ENCODE measurements at regions of chr2 and their contacts with region 1.

Region 1: DNA sequence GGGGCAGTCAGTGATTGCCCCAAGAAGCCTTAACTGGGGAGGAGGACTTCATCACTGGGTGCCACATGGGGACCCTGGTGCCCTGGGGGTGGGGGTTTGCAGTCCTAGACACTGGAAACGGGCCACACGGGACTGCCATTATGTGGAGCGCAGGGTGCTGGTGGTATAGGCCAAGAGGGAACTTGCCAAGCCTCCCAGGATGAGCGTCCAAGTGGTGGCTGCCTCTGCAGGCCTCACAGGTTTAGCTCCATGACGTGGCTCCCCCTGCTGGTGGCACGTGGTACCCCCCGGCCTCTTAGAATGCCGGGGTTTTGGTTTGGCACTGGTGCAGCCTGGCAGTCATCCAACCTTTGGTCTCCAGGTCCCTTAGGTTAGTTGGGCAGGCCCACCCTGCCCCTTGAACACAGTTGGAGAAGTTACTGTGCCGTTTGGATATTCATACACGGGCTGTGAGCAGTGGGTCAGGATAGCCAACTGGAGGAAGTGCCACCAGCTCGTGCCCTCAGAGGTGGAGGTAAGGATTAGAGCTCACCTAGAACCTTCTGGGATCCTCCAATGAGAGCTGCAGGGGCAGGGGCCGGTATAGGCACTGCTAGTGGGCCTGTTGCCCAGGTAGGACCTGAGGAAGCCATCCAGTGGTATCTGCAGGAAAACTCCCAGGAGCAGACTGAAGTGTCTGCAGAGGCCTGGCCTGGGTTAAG is 5.6 kb downstream of the PTMA start:
- DNase-seq: peak; percentile 93 to 97 (median 95)
- H3K4me3 ChIP-seq: peak overlapping the region in 1 of 7 experiments; percentile 45
- H3K27ac ChIP-seq: no peak overlapping the region
- H3K4me1 ChIP-seq: peaks cover 8 to 38% (median 33%) of the 10 kb centered on the region in 4 experiments
- H3K27me3 ChIP-seq: no peaks in the 10 kb centered on the region

Region 2: GRCh38 chr2:231612179-231613053 is 101.5 kb before region 1 on chr2:
- CTCF ChIA-PET with region 1: interaction called, 176 read pairs
- POLR2A ChIA-PET with region 1: interaction called, 21 read pairs
- DNase-seq: peak; percentile 89 to 94 (median 93)
- H3K4me3 ChIP-seq: peak overlapping the region in 2 of 7 experiments; percentile 68 to 78
- H3K27ac ChIP-seq: peak overlapping the region; percentile 94 to 96
- H3K4me1 ChIP-seq: peaks cover 3 to 63% (median 55%) of the 10 kb centered on the region in 4 experiments
- H3K27me3 ChIP-seq: no peaks in the 10 kb centered on the region

Region 3: DNA sequence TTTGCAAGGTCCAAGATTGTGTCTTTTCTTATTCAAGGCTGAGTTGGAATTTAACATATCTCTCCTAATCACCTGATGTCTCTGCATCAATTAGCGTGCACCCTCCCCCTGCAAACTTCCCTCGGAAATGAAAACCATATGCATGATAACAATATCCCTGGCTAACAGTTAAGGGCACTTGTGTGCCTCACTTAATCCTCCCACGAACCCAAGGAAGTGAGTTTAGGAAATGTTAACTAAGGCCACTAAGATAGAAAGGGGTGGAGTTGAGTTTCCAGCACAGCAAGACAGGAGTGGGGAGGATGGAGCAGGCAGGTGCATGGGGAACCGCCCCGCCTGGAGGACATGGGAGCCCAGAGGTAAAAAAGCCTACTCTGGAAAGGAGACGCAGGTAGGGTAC is 58.0 kb before region 1 on chr2:
- CTCF ChIA-PET with region 1: interaction called, 10 read pairs
- POLR2A ChIA-PET with region 1: no interaction called
- DNase-seq: no peak
- H3K4me3 ChIP-seq: no peak overlapping the region
- H3K27ac ChIP-seq: no peak overlapping the region
- H3K4me1 ChIP-seq: peaks cover 0 to 6% (median 4%) of the 10 kb centered on the region in 4 experiments
- H3K27me3 ChIP-seq: no peaks in the 10 kb centered on the region

Region 4: DNA sequence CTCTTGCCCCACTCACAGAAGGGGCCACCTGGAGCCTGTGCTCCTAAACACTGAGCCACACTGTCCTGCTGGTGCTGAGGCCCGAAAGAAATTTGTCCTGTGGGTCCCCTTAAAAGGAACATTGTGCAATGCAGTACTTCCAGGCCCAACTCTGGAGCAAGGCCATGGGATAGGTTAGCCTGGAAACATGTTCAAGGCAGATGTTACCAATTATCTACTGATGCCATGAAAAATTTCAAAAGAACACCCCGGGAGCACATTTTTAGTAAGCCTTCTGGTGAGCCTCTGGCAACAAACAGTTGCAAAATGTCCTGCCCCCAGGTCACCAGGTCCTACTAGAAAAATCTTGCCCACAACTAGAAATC is 17.9 kb before region 1 on chr2:
- CTCF ChIA-PET with region 1: interaction called, 191 read pairs
- POLR2A ChIA-PET with region 1: interaction called, 4 read pairs
- DNase-seq: no peak
- H3K4me3 ChIP-seq: no peak overlapping the region
- H3K27ac ChIP-seq: no peak overlapping the region
- H3K4me1 ChIP-seq: peaks cover 0 to 11% (median 5%) of the 10 kb centered on the region in 4 experiments
- H3K27me3 ChIP-seq: no peaks in the 10 kb centered on the region

Region 5: DNA sequence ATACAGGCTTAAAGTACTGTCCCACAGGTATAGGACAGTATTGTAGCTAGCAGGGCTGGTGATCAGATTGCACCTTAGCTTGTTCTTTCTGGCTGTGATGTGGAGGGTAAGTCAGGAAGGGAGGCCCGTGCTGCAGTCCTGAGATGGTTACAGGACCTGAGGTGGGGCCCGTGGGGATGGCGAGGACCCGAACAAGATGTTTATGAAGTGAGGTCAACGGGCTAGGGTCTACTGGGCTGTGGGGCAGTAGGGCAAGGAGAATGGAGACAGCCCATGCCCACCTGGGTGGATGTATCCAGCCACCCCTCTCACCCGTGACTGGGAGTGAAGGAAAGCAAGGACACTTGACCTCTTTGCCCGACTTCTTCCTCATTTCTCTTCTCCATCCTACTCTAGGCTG is 12.3 kb after region 1 on chr2:
- CTCF ChIA-PET with region 1: interaction called, 37 read pairs
- POLR2A ChIA-PET with region 1: no interaction called
- DNase-seq: no peak
- H3K4me3 ChIP-seq: no peak overlapping the region
- H3K27ac ChIP-seq: no peak overlapping the region
- H3K4me1 ChIP-seq: no peaks in the 10 kb centered on the region
- H3K27me3 ChIP-seq: no peaks in the 10 kb centered on the region

Measured in common myeloid progenitor, CD34-positive (primary cell).